ENCODE measurements at regions of chr7 and their contacts with region 1.

Region 1: DNA sequence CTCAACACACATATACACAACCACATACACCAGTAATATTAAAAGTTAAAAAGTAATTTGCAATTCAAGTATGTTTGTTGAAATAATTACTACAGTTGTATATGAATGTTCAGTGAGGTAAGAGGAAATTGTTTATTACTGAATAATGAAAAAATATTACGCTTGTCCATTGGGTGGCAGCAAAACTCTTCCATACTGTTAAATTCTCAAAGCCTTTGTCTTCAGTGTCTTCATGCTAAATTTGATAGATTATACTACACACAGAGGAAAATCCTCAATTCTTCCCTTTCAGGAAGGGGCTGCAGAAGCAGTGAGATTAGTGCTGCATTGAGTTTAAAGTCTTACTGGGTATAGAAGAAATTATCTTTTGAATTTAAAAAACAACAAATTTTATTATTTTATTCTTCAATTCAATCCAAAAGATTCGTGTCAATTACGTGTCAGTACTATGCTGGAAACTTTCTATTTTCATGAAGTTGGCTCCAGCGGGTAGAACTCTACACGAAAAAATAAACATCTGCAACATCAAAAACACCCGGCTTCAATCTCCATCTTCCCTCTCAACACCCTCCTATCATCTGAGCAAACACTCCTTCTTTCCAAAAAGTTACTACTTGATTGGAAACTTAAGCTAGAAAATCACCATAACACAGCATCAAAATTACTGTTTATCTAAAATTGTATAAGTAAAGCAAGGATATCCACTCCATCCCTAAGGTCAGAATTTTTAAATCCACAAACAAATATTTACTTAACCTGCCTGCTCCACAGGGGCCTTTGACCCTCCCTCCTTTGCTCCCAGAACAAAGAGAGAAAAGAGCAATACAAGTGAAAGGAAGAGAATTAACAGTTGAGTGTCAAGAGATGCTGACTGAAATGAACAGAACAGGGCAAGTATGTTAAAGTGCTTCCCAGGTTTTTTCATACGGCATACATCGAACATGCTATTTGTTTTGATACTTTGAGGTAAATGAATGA is 37.0 kb upstream of the TES start:
- DNase-seq: peak in 1 of 2 donors; percentile 79
- ATAC-seq: peak; percentile 58 to 85 (median 77)
- H3K4me3 ChIP-seq: no peak overlapping the region
- H3K4me3 Mint-ChIP-seq: no peak overlapping the region
- H3K27ac ChIP-seq: no peak overlapping the region
- H3K27ac Mint-ChIP-seq: no peak overlapping the region
- H3K4me1 ChIP-seq: no peaks in the 10 kb centered on the region
- H3K4me1 Mint-ChIP-seq: no peaks in the 10 kb centered on the region
- H3K27me3 ChIP-seq: no peaks in the 10 kb centered on the region
- H3K27me3 Mint-ChIP-seq: peaks cover 14% of the 10 kb centered on the region in 2 donors
- CTCF ChIP-seq: peak; percentile 77

Region 2: GRCh38 chr7:116024826-116025809 is 148.2 kb before region 1 on chr7:
- intact Hi-C with region 1: no loop called
- DNase-seq: no peak
- ATAC-seq: no peak
- H3K4me3 ChIP-seq: no peak overlapping the region
- H3K4me3 Mint-ChIP-seq: no peak overlapping the region
- H3K27ac ChIP-seq: no peak overlapping the region
- H3K27ac Mint-ChIP-seq: no peak overlapping the region
- H3K4me1 ChIP-seq: no peaks in the 10 kb centered on the region
- H3K4me1 Mint-ChIP-seq: peaks cover 0 to 9% of the 10 kb centered on the region in 2 donors
- H3K27me3 ChIP-seq: no peaks in the 10 kb centered on the region
- H3K27me3 Mint-ChIP-seq: peaks cover 0 to 2% of the 10 kb centered on the region in 2 donors
- CTCF ChIP-seq: no peak

Region 3: GRCh38 chr7:116236020-116236630 is 62.8 kb after region 1 on chr7:
- intact Hi-C with region 1: loop called (anchors 2 kb)
- DNase-seq: peak in 1 of 2 donors; percentile 82
- ATAC-seq: peak; percentile 65 to 75 (median 73)
- H3K4me3 ChIP-seq: no peak overlapping the region
- H3K4me3 Mint-ChIP-seq: peak overlapping the region; percentile 57
- H3K27ac ChIP-seq: peak overlapping the region; percentile 31
- H3K27ac Mint-ChIP-seq: peak overlapping the region; percentile 93 to 94
- H3K4me1 ChIP-seq: peaks cover 21% of the 10 kb centered on the region
- H3K4me1 Mint-ChIP-seq: peaks cover 78 to 82% of the 10 kb centered on the region in 2 donors
- H3K27me3 ChIP-seq: no peaks in the 10 kb centered on the region
- H3K27me3 Mint-ChIP-seq: no peaks in the 10 kb centered on the region
- CTCF ChIP-seq: peak; percentile 87

Region 4: DNA sequence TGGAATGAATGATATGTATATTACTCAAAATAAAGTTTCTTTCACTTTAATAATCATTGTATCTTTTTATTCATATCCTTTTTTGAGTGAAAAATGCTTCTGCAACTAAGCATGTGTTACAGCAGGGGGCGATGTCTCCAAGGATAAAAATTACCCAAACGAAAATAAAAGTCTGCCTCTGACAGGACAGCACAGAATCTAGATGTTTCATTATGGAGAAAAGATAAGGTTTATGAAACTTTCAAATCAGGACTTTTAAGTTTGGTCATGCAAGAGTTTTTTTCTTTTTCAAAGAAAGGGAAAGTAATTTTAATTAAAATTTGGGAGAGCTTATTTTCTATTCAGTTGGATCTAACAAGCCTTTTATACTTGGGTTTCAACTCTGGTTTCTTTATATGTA is 85.4 kb after region 1 on chr7:
- intact Hi-C with region 1: no loop called
- DNase-seq: peak in 1 of 2 donors; percentile 73
- ATAC-seq: peak; percentile 66 to 80 (median 75)
- H3K4me3 ChIP-seq: no peak overlapping the region
- H3K4me3 Mint-ChIP-seq: no peak overlapping the region
- H3K27ac ChIP-seq: no peak overlapping the region
- H3K27ac Mint-ChIP-seq: peak overlapping the region; percentile 66 to 73
- H3K4me1 ChIP-seq: no peaks in the 10 kb centered on the region
- H3K4me1 Mint-ChIP-seq: peaks cover 34 to 37% of the 10 kb centered on the region in 2 donors
- H3K27me3 ChIP-seq: no peaks in the 10 kb centered on the region
- H3K27me3 Mint-ChIP-seq: no peaks in the 10 kb centered on the region
- CTCF ChIP-seq: peak; percentile 75

Region 5: DNA sequence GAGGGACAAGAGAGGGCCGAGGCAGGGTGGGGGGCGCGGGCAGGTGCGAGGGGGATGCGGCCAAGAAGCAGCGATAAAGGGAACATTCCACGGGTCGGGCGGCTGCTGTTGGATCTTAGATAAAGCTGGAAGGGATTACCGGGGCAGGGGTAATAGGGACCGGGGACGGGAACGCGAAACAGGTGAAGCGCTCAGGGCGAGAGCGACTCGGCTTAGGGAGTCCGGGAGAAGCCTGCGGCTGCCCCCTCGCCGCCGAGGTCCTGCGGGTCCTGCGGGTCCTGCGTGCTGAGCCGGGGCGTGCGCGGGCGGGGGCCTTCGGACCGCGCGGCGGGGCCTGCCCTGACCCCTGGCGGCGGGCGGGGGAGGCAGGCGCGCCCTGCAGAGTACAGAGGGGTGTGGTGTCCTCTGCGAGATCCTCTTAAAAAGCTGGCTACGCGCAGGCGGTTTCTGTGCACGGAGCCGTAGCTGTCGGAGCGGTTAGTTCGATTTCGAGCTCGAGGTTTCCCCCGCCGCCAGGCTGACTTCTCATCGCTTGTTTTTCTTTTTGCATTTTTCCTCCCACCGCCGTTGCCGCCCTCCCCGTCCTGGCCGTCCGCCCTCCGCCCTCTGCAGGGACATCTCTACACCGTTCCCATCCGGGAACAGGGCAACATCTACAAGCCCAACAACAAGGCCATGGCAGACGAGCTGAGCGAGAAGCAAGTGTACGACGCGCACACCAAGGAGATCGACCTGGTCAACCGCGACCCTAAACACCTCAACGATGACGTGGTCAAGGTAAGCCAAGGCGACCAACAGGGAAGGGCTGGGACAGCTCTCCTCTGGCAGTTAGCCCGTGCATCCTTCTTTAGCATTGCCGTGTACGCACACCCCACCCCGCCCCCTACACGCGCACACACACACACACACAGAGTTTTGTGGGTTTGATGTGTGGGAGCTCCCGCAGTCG is 352.8 kb after region 1 on chr7:
- intact Hi-C with region 1: loop called (anchors 2 kb)
- DNase-seq: peak; percentile 50 to 78
- ATAC-seq: peak; percentile 86 to 93 (median 89)
- H3K4me3 ChIP-seq: peak overlapping the region; percentile 45
- H3K4me3 Mint-ChIP-seq: peak overlapping the region; percentile 85
- H3K27ac ChIP-seq: no peak overlapping the region
- H3K27ac Mint-ChIP-seq: peak overlapping the region in 1 of 2 donors; percentile 71
- H3K4me1 ChIP-seq: peaks cover 25% of the 10 kb centered on the region
- H3K4me1 Mint-ChIP-seq: peaks cover 14 to 25% of the 10 kb centered on the region in 2 donors
- H3K27me3 ChIP-seq: peaks cover 46% of the 10 kb centered on the region
- H3K27me3 Mint-ChIP-seq: peaks cover 55 to 80% of the 10 kb centered on the region in 2 donors
- CTCF ChIP-seq: peak; percentile 76

Region 6: DNA sequence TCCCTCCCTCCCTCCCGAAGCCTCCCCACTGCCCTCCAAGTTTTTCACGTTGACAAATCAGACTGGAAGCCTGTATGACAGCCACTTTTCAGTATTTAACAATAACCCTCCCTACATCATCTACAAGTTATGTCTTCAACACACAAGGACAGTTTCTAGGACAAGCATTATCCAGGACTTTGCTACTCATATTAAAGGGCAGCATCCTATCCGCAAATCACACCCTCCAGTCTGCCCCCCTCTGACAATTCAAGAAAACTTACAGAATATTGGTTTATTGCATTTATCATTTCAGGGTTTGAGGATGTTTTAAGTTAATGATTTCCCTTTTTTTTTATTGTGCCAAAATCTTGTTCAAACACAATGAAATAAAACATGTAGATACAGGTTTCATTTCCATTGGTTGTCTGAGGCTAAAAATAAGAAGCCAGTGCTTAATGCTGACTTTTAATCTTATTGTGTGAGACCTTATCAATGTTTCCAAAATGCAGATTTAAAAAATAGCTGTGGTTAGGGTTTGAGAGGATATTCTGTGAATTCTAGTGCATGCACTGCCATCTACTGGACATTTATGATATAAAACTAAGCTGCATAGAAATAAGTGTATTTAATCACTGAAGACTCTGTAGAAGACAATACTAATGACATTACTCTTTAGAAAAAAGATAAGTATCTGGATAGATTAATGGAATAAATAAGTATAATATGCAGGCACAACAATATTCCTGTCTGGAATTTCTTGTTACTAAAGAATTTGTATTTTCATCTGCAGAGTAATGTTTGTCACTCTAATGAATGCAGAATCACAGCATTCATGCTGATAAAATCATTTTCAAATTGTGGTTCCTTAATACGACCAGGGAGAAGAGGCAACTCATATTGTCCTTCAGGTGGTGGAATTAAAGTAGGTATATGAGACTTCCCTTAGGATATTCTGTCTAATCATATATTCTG is 415.6 kb after region 1 on chr7:
- intact Hi-C with region 1: loop called (anchors 1 kb)
- DNase-seq: peak in 1 of 2 donors; percentile 67
- ATAC-seq: peak; percentile 53 to 66 (median 57)
- H3K4me3 ChIP-seq: no peak overlapping the region
- H3K4me3 Mint-ChIP-seq: no peak overlapping the region
- H3K27ac ChIP-seq: no peak overlapping the region
- H3K27ac Mint-ChIP-seq: no peak overlapping the region
- H3K4me1 ChIP-seq: peaks cover 7% of the 10 kb centered on the region
- H3K4me1 Mint-ChIP-seq: peaks cover 18 to 22% of the 10 kb centered on the region in 2 donors
- H3K27me3 ChIP-seq: peaks cover 7% of the 10 kb centered on the region
- H3K27me3 Mint-ChIP-seq: peaks cover 19 to 39% of the 10 kb centered on the region in 2 donors
- CTCF ChIP-seq: peak; percentile 88

Region 7: DNA sequence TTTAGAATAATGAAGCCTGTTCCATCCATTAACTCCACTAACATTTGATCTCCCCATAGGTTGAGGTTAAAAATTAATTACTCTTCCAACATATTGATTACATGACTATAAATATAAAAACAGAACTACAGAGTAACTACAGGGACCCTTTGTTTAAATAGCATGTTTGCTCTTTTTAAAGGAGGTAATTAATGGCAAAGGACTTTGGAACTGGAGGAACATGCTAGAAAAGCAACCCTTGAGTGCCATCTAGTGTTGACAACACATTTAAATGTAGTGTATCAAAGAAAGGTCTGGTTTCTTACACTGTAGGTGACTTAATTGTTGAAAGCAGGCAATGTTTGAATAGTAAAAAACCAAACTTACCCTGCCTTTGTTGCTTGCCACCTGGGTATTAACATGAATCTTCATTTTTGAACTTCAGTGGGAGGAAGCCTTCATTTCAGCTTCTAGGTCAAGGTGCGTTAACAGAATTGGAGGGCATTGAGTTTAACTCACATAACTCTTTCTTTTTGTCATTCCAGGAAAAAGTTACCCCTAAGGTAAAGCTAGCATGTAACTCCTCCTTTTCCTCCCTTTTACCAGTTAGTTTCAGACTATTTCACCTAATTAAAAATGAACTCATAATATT is 636.4 kb after region 1 on chr7:
- intact Hi-C with region 1: loop called (anchors 2 kb)
- DNase-seq: peak in 1 of 2 donors; percentile 66
- ATAC-seq: peak in 2 of 3 donors; percentile 48 to 52
- H3K4me3 ChIP-seq: no peak overlapping the region
- H3K4me3 Mint-ChIP-seq: no peak overlapping the region
- H3K27ac ChIP-seq: no peak overlapping the region
- H3K27ac Mint-ChIP-seq: no peak overlapping the region
- H3K4me1 ChIP-seq: no peaks in the 10 kb centered on the region
- H3K4me1 Mint-ChIP-seq: no peaks in the 10 kb centered on the region
- H3K27me3 ChIP-seq: no peaks in the 10 kb centered on the region
- H3K27me3 Mint-ChIP-seq: no peaks in the 10 kb centered on the region
- CTCF ChIP-seq: peak; percentile 52

Measured in natural killer cell (primary cell).